ENCODE measurements at regions of chr11 and their contacts with region 1.

Region 1: GRCh38 chr11:75508044-75508561 is 17.6 kb downstream of the GDPD5 start:
- DNase-seq: peak; percentile 82
- ATAC-seq: peak; percentile 86
- H3K4me3 ChIP-seq: peak overlapping the region in 2 of 5 experiments; percentile 0 to 13
- H3K4me3 Mint-ChIP-seq: peak overlapping the region; percentile 81
- H3K27ac ChIP-seq: peak overlapping the region; percentile 68 to 82
- H3K27ac Mint-ChIP-seq: peak overlapping the region; percentile 97
- H3K4me1 ChIP-seq: peaks cover 25 to 49% of the 10 kb centered on the region in 2 donors
- H3K4me1 Mint-ChIP-seq: peaks cover 58% of the 10 kb centered on the region
- H3K27me3 ChIP-seq: no peaks in the 10 kb centered on the region
- H3K27me3 Mint-ChIP-seq: no peaks in the 10 kb centered on the region
- CTCF ChIP-seq: no peak

Region 2: DNA sequence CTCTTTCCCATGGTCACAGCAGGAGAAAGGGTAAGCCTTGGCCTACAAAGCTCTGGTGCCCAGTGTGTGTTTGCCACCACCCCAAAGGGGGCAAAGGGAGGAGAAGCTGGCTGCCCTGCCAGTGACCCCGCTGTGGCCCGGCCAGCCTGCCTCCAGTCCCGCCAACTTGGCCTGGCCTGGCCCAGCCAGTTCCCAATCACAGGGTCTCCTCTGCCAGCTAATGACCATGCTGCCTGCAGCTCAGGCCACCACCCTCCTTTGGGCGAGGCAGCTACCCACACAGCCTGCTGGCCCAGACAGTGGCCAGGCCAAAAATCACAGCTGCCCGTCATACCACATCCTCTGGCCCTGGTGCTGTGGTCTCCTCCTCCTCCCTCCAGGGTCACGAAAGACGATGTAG is 12.6 kb after region 1 on chr11:
- CTCF ChIA-PET with region 1: interaction called, 7 read pairs
- POLR2A ChIA-PET with region 1: interaction called, 9 read pairs
- intact Hi-C with region 1: loop called (anchors 1 kb)
- DNase-seq: no peak
- ATAC-seq: no peak
- H3K4me3 ChIP-seq: no peak overlapping the region
- H3K4me3 Mint-ChIP-seq: no peak overlapping the region
- H3K27ac ChIP-seq: no peak overlapping the region
- H3K27ac Mint-ChIP-seq: peak overlapping the region; percentile 59
- H3K4me1 ChIP-seq: peaks cover 53 to 62% of the 10 kb centered on the region in 2 donors
- H3K4me1 Mint-ChIP-seq: peaks cover 64% of the 10 kb centered on the region
- H3K27me3 ChIP-seq: peaks cover 0 to 25% (median 9%) of the 10 kb centered on the region in 4 experiments
- H3K27me3 Mint-ChIP-seq: no peaks in the 10 kb centered on the region
- CTCF ChIP-seq: no peak